AG04449 (cell line): ENCODE measurements at regions of chr9 and their contacts with region 1.

Region 1: GRCh38 chr9:128191406-128192046 is at the start of gene CIZ1:
- DNase-seq: no peak
- H3K4me3 ChIP-seq: peak within 1 kb of the TSS; percentile 82
- CTCF ChIP-seq: peak; percentile 80

Region 2: GRCh38 chr9:128175102-128175563 is 16.4 kb before region 1 on chr9:
- CTCF ChIA-PET with region 1: interaction called, 19 read pairs
- POLR2A ChIA-PET with region 1: no interaction called
- DNase-seq: no peak
- H3K4me3 ChIP-seq: no peak overlapping the region
- CTCF ChIP-seq: no peak